Activated CD4-positive, alpha-beta T cell treated with anti-CD3 and anti-CD28 coated beads for 36 hours (primary cell): ENCODE measurements at regions of chr17 and their contacts with region 1.

Region 1: DNA sequence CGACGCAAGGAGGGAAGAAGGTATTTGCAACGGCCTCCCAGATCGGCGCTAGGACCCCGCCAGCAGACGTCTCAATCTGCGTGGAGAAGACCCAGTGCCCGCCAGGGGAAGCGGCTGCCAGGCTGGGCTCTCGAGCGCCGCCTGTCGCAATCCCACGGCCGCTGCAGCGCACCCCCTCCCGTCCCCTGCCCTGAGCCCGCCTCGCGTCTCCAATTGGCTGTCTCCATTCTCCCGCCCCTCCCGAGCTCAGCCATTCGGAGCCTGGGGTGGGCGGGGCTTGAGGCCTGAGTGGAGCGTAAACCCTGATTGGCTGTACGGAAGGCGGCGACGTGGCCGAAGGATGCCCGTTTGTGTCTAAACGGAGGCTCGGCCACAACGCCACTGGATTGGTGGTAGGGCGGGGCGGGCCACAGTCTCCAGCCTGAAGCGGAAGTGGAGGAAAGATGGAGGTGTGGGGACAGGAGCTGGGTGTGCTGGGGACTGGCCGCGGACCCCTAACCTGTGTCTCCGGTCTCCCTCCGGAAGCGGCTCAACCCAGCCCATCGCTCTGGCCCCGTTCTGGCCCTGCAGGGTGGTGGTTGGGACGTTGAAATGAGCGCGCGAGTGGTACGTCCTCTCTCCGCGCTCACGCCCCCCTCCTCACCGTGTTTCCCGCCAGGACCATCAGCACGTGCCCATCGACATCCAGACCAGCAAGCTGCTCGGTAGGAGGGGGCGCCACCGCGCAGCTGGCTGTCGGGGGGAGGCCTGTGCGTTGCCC is at the start of gene CDK5RAP3:
- DNase-seq: peak; percentile 100
- ATAC-seq: peak; percentile 100
- H3K4me3 Mint-ChIP-seq: peak within 1 kb of the TSS; percentile 97
- H3K27ac Mint-ChIP-seq: peak within 1 kb of the TSS; percentile 94
- H3K4me1 Mint-ChIP-seq: peaks cover 21% of the 10 kb centered on the region
- H3K27me3 Mint-ChIP-seq: no peaks in the 10 kb centered on the region
- total RNA-seq, gene CDK5RAP3: 147 to 156 TPM

Region 2: DNA sequence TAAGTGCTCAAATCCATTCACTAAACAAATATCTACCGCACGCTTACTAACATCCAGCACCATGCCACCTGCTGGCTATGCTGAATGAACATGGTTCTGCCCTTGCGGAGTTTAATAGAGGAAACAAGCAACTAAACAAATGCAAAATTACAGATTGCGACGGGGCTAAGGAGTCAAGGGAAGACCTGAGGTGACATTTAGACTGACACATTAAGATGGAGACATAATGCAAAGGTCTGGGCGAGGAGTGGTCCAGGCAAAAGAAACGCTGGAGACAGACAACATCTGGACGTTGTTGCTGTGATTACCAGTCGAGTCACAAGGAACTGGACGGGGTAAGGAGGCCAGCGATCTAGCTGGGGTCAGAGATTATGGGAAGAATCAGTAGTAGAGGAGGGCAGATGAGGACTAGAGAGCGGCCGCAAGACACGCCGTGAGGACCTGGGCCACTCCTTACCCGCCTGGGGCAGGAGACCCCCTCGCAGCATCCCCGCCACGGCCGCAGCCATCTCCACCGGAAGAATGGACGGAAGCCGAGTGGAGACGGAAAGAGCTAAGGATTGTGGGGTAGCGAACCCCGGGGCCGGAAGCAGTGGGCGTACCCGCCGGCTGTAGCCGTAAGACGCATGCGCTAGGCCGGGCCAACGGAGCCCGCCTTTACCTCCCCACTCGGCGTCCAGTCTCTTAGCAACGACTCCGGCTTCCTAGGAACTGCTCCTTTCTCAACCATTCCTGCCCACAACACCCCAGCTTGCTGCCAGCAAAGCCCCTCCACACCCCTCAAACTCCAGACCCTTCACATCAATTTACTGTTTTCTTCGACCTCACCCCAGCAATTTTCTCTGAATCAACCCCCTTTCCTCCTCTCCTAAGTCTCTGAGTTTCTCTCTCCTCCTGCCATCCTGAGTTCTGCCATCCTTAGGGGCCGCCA is 139.6 kb before region 1 on chr17 and contains the starts of genes LRRC46 and MRPL10:
- CTCF ChIA-PET with region 1: interaction called, 3 read pairs
- POLR2A ChIA-PET with region 1: no interaction called
- intact Hi-C with region 1: loop called in 1 of 2 experiments (anchors 2 kb)
- DNase-seq: peak; percentile 96
- ATAC-seq: peak; percentile 94
- H3K4me3 Mint-ChIP-seq: peak within 1 kb of the TSS; percentile 88
- H3K27ac Mint-ChIP-seq: peak within 1 kb of the TSS; percentile 88
- H3K4me1 Mint-ChIP-seq: peaks cover 57% of the 10 kb centered on the region
- H3K27me3 Mint-ChIP-seq: no peaks in the 10 kb centered on the region
- total RNA-seq, gene LRRC46: 0.46 to 0.82 TPM
- total RNA-seq, gene MRPL10: 66.9 to 70.9 TPM

Region 3: DNA sequence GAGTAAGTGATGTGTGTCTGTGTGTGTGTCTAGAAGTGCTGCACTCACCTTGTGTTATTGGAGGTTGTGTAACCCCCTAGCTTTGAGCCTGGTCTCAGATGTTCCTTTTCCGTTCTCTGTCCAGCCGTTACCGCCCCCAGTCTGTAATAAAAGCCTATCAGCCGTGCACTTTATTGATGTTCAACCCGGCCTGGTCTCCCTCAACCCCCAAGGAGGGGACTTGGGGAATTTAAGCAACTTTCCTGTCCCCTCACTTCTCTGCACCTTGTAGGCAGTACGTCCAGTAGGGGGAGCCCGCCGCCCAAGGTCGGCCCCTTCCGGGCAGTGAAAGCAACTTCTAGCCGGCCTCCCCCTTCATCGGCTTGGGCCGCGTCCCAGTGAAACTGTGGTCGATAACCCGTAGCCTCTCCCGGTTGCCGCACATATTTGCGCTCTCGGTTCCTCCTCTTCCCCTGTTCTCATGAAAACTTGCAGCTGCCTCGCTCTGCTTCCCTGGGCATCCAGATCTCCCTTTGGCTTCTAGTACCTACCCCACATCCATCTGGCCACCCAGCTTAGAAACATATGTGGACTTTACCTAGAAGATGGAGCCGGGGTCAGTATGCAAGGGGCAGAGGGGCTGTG is 21.6 kb before region 1 on chr17:
- CTCF ChIA-PET with region 1: interaction called, 222 read pairs
- POLR2A ChIA-PET with region 1: interaction called, 15 read pairs
- intact Hi-C with region 1: loop called (anchors 1 kb)
- DNase-seq: peak; percentile 91
- ATAC-seq: peak; percentile 75
- H3K4me3 Mint-ChIP-seq: peak overlapping the region; percentile 30
- H3K27ac Mint-ChIP-seq: peak overlapping the region; percentile 66
- H3K4me1 Mint-ChIP-seq: peaks cover 43% of the 10 kb centered on the region
- H3K27me3 Mint-ChIP-seq: no peaks in the 10 kb centered on the region

Region 4: DNA sequence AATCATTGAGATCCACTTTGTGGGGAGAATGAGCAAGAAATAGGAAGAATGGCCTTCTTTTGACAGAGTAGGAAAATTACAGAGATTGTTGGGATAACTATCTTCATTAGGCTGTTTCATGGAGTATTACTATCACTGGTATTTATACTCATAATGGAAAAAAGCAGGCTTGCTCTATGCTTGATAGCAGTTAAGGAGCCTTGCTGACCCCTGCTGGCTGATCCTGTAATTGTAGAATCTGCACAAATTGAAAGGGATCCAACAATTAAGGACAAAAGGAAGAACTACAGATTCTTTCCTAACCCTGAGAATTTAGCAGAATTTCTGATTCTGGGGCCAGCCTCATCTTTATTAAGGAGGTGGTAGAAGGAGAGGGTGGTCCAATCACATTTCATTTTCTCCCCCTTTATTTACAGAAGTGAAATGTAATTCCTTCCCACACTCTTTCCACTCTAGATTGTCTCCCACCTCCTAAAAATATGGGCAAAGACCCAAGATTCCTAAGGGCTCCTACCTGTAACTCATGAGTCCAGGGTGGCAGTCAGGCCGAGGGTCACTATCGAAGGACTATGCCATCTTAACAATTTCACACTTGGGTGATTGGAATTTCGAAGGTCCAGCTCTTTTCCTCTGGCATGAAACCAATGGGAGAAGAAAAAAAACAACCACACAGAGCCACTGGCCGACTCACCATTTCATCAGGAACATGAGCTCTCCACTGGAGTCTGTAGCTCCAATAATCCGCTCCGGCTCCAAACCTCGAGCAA is 103.6 kb after region 1 on chr17:
- CTCF ChIA-PET with region 1: no interaction called
- POLR2A ChIA-PET with region 1: no interaction called
- intact Hi-C with region 1: no loop called
- DNase-seq: peak; percentile 86
- ATAC-seq: peak; percentile 75
- H3K4me3 Mint-ChIP-seq: no peak overlapping the region
- H3K27ac Mint-ChIP-seq: no peak overlapping the region
- H3K4me1 Mint-ChIP-seq: no peaks in the 10 kb centered on the region
- H3K27me3 Mint-ChIP-seq: no peaks in the 10 kb centered on the region

Region 5: GRCh38 chr17:48101012-48101720 is 130.3 kb after region 1 on chr17 and contains the start of gene CBX1:
- CTCF ChIA-PET with region 1: no interaction called
- POLR2A ChIA-PET with region 1: no interaction called
- intact Hi-C with region 1: loop called in 1 of 2 experiments (anchors 2 kb)
- DNase-seq: peak; percentile 97
- ATAC-seq: peak; percentile 95
- H3K4me3 Mint-ChIP-seq: peak within 1 kb of the TSS; percentile 99
- H3K27ac Mint-ChIP-seq: peak within 1 kb of the TSS; percentile 83
- H3K4me1 Mint-ChIP-seq: peaks cover 41% of the 10 kb centered on the region
- H3K27me3 Mint-ChIP-seq: no peaks in the 10 kb centered on the region
- total RNA-seq, gene CBX1: 58.6 to 66.0 TPM

Region 6: DNA sequence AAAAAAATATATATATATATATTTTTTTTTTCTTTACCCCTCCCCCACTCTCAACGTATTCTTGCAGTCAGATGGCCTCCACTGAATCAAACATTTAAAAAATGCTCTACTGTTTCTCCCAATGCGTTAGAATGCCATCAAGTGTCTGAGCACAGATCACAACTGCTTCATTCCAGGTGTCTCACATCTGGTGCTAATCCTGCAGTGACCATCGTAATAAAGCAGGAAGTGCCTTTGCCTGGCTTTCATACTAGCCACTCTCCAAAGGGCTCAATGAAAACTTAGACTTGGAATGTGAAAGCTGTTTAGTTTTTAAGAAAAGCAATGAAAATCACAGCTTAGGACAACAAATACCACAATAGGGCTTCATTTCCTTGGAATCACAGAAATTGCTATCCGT is 422.0 kb after region 1 on chr17:
- CTCF ChIA-PET with region 1: no interaction called
- POLR2A ChIA-PET with region 1: no interaction called
- intact Hi-C with region 1: no loop called
- DNase-seq: no peak
- ATAC-seq: no peak
- H3K4me3 Mint-ChIP-seq: no peak overlapping the region
- H3K27ac Mint-ChIP-seq: no peak overlapping the region
- H3K4me1 Mint-ChIP-seq: peaks cover 48% of the 10 kb centered on the region
- H3K27me3 Mint-ChIP-seq: no peaks in the 10 kb centered on the region

Region 7: GRCh38 chr17:48445248-48445620 is 474.4 kb after region 1 on chr17:
- CTCF ChIA-PET with region 1: no interaction called
- POLR2A ChIA-PET with region 1: no interaction called
- intact Hi-C with region 1: no loop called
- DNase-seq: no peak
- ATAC-seq: no peak
- H3K4me3 Mint-ChIP-seq: no peak overlapping the region
- H3K27ac Mint-ChIP-seq: no peak overlapping the region
- H3K4me1 Mint-ChIP-seq: peaks cover 67% of the 10 kb centered on the region
- H3K27me3 Mint-ChIP-seq: no peaks in the 10 kb centered on the region